Dendritic cell treated with granulocyte-macrophage colony-stimulating factor and Interleukin-4, amounts not matched to agents 40 ng/mL and 50 ng/mL, for 4 days (primary cell): ENCODE measurements at regions of chr3 and their contacts with region 1.

Region 1: GRCh38 chr3:196684548-196685407 is 27.3 kb downstream of the CEP19 start:
- H3K4me3 Mint-ChIP-seq: peak overlapping the region; percentile 45
- H3K27ac Mint-ChIP-seq: peak overlapping the region; percentile 77
- H3K4me1 Mint-ChIP-seq: peaks cover 63% of the 10 kb centered on the region
- H3K27me3 Mint-ChIP-seq: no peaks in the 10 kb centered on the region

Region 2: DNA sequence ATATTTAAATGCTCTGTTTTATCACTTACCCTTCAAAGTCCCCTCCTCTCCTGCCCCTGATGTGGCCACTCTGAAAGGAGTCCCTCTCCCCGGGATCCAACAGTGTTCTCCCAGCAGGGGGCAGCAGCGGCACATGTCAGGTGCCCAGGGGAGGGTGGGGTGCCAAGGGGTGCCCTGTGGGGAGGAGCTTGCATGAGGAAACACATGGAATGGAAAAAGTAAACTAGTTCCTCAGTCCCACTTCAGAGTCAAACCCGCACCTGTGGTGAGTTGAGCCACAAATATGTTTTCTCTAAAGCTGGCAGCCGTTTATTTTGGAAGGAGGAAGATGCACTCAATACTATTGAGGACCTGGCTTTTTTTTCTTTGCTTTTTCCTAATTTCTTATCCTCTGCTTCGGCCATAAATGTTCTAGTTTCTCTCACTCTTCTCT is 75.4 kb before region 1 on chr3:
- intact Hi-C with region 1: loop called (anchors 1 kb)
- H3K4me3 Mint-ChIP-seq: peak overlapping the region; percentile 43
- H3K27ac Mint-ChIP-seq: peak overlapping the region; percentile 79
- H3K4me1 Mint-ChIP-seq: peaks cover 27% of the 10 kb centered on the region
- H3K27me3 Mint-ChIP-seq: no peaks in the 10 kb centered on the region